Right lobe of liver (tissue), 6 donors: ENCODE measurements at regions of chr11 and their contacts with region 1.

Region 1: DNA sequence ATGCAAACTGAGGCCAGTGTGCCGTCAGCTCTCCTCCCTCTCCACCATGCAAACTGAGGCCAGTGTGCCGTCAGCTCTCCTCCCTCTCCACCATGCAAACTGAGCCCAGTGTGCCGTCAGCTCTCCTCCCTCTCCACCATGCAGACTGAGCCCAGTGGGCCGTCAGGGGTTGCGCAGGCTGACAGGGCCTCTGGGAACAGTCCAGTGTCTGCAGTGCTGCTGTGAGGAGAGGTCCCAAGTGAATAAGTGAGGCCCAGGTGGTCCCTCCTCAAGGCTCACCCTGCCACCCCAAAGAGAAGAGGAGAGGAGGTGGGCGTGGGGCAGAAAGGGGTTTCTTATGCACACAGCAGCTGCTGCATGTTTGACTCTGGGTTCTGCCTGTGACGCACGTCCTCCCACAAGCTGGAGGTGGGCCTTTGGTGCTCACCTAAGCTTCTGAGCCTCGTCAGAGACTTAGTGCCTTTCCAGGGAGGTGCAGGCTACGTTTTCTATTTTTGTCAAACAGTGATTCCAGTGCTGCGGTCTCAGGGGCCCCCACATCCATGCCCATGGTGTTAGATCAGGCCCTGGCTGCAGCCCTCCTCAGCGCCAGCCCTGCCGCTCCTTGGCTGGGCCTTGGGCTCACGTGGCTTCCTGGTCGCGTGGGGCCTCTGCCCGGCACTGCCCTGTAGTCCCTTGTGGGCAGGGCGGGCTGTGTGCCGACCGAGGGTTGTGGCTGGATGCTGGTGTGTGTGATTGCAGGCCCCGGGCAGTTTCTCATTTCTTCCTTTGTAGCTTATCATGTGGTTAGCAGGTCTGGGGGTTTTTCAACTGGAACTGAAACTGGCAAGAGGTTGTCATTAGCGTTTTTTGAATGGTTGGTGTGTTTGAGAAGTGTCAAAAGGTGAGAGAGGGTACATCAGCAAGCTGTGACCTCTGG is 7.1 kb downstream of the TPCN2 start:
- DNase-seq: peak; percentile 71 to 86 (median 78)
- ATAC-seq: peak; percentile 50 to 72 (median 69)
- H3K4me3 ChIP-seq: no peak overlapping the region
- H3K27ac ChIP-seq: peak overlapping the region in 1 of 3 donors; percentile 80
- H3K4me1 ChIP-seq: peaks cover 0 to 55% (median 24%) of the 10 kb centered on the region in 4 donors
- H3K27me3 ChIP-seq: no peaks in the 10 kb centered on the region
- CTCF ChIP-seq: no peak
- POLR2A ChIP-seq: no peak

Region 2: GRCh38 chr11:68912254-68912653 is 143.6 kb before region 1 on chr11:
- intact Hi-C with region 1: loop called in 1 of 2 experiments (anchors 10 kb)
- DNase-seq: no peak
- ATAC-seq: no peak
- H3K4me3 ChIP-seq: no peak overlapping the region
- H3K27ac ChIP-seq: no peak overlapping the region
- H3K4me1 ChIP-seq: no peaks in the 10 kb centered on the region
- H3K27me3 ChIP-seq: no peaks in the 10 kb centered on the region
- CTCF ChIP-seq: no peak
- POLR2A ChIP-seq: no peak

Region 3: GRCh38 chr11:69233744-69234136 is 177.9 kb after region 1 on chr11:
- intact Hi-C with region 1: no loop called
- DNase-seq: peak in 1 of 3 donors; percentile 25
- ATAC-seq: no peak
- H3K4me3 ChIP-seq: no peak overlapping the region
- H3K27ac ChIP-seq: no peak overlapping the region
- H3K4me1 ChIP-seq: no peaks in the 10 kb centered on the region
- H3K27me3 ChIP-seq: no peaks in the 10 kb centered on the region
- CTCF ChIP-seq: no peak
- POLR2A ChIP-seq: no peak

Region 4: GRCh38 chr11:69609351-69609750 is 553.5 kb after region 1 on chr11:
- intact Hi-C with region 1: no loop called
- DNase-seq: no peak
- ATAC-seq: no peak
- H3K4me3 ChIP-seq: no peak overlapping the region
- H3K27ac ChIP-seq: no peak overlapping the region
- H3K4me1 ChIP-seq: no peaks in the 10 kb centered on the region
- H3K27me3 ChIP-seq: no peaks in the 10 kb centered on the region
- CTCF ChIP-seq: no peak
- POLR2A ChIP-seq: no peak